ENCODE measurements at regions of chr17 and their contacts with region 1.

Region 1: GRCh38 chr17:28571255-28572122 is at the start of gene PIGS:
- H3K4me3 ChIP-seq: peak within 1 kb of the TSS; percentile 73
- H3K27ac ChIP-seq: peak within 1 kb of the TSS; percentile 84
- H3K4me1 ChIP-seq: peaks cover 11% of the 10 kb centered on the region
- CTCF ChIP-seq: no peak

Region 2: DNA sequence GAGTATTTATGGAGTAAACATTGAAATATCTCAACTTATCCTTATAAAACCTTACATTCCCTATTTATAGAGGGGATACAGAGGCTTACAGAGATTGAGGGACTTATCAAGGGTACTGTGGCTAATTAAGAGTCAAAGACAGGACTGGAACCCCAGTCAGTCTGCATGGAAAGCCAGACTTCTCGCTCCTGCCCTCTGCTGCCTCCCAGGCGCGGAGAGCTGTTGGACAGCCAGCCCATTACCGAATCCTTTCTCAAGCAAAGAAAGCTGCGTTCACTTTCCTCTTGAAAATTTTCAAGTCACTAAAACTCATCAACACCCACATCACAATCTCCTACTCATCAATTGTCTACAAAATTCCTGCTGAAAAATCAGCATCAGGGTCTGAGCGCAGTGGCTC is 151.2 kb before region 1 on chr17:
- CTCF ChIA-PET with region 1: no interaction called
- POLR2A ChIA-PET with region 1: no interaction called
- H3K4me3 ChIP-seq: no peak overlapping the region
- H3K27ac ChIP-seq: no peak overlapping the region
- H3K4me1 ChIP-seq: no peaks in the 10 kb centered on the region
- CTCF ChIP-seq: no peak

Region 3: DNA sequence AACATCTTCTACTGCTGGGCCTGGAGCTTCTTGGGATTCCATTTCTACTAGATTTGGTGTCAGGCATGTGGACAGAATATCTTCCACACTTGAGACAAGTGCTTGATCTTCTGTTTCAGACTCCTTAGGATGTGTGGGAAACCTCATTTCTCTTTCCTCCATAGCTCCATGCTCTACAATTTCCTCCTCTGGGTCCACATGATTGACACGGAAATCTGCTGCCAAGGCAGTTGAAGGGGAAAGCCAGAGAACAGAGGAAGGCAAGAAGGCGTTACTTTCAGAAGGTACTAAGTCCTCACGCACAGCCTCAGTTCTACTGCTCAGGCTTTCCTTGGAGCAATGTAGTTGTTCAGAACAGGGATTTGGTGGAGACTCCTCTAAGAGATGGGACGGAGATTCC is 20.8 kb after region 1 on chr17:
- CTCF ChIA-PET with region 1: interaction called, 5 read pairs
- POLR2A ChIA-PET with region 1: interaction called, 30 read pairs
- H3K4me3 ChIP-seq: no peak overlapping the region
- H3K27ac ChIP-seq: no peak overlapping the region
- H3K4me1 ChIP-seq: no peaks in the 10 kb centered on the region
- CTCF ChIP-seq: no peak

Region 4: GRCh38 chr17:28598799-28599310 is 27.4 kb after region 1 on chr17 and contains the start of gene SPAG5:
- CTCF ChIA-PET with region 1: interaction called, 4 read pairs
- POLR2A ChIA-PET with region 1: interaction called, 30 read pairs
- H3K4me3 ChIP-seq: peak within 1 kb of the TSS; percentile 87
- H3K27ac ChIP-seq: peak within 1 kb of the TSS; percentile 90
- H3K4me1 ChIP-seq: no peaks in the 10 kb centered on the region
- CTCF ChIP-seq: no peak

Measured in HEK293 (cell line).